ENCODE measurements at regions of chr3 and their contacts with region 1.

Region 1: GRCh38 chr3:33787328-33788009 is 11.0 kb upstream of the PDCD6IP start:
- DNase-seq: peak; percentile 84
- ATAC-seq: peak; percentile 81
- H3K4me3 ChIP-seq: peak overlapping the region; percentile 39; the same call in 1 of the 2 replicates
- H3K27ac ChIP-seq: no peak overlapping the region
- H3K4me1 ChIP-seq: peaks cover 30% of the 10 kb centered on the region
- H3K27me3 ChIP-seq: no peaks in the 10 kb centered on the region
- CTCF ChIP-seq: peak; percentile 91

Region 2: DNA sequence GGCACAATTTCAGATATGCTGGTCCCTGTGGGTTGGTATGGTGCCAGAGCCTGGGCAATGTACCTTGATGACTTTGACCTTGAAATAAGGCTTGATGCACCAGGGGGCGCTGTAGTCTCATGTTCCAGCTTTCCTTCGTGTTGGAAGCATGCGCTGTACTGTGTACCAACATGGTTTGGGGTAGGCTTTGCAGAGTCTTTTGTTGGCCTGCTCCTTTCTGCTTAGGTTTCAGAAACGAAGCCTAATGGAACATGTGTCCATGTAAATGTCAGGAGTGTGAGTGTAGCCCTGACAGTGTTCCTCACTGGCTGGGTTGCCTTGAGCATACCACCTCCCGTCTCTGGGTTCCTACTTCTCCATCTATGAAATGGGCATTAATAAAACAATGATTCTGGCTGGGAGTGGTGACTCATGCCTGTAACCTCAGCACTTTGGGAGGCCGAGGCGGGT is 839.7 kb before region 1 on chr3:
- CTCF ChIA-PET with region 1: no interaction called
- POLR2A ChIA-PET with region 1: no interaction called
- intact Hi-C with region 1: loop called (anchors 5 kb)
- DNase-seq: peak; percentile 97
- ATAC-seq: peak; percentile 83
- H3K4me3 ChIP-seq: no peak overlapping the region
- H3K27ac ChIP-seq: no peak overlapping the region
- H3K4me1 ChIP-seq: 0 out of 2 replicates have a peak, but pooled peaks cover 6% of the 10 kb centered on the region
- H3K27me3 ChIP-seq: no peaks in the 10 kb centered on the region
- CTCF ChIP-seq: peak; percentile 94

Region 3: GRCh38 chr3:33131331-33132018 is 656.0 kb before region 1 on chr3:
- CTCF ChIA-PET with region 1: interaction called, 8 read pairs
- POLR2A ChIA-PET with region 1: no interaction called
- intact Hi-C with region 1: loop called (anchors 5 kb)
- DNase-seq: peak; percentile 85
- ATAC-seq: peak; percentile 83
- H3K4me3 ChIP-seq: no peak overlapping the region
- H3K27ac ChIP-seq: no peak overlapping the region
- H3K4me1 ChIP-seq: 0 out of 2 replicates have a peak, but pooled peaks cover 3% of the 10 kb centered on the region
- H3K27me3 ChIP-seq: no peaks in the 10 kb centered on the region
- CTCF ChIP-seq: peak; percentile 94

Region 4: GRCh38 chr3:33250712-33251111 is 536.8 kb before region 1 on chr3:
- CTCF ChIA-PET with region 1: no interaction called
- POLR2A ChIA-PET with region 1: no interaction called
- intact Hi-C with region 1: loop called (anchors 10 kb)
- DNase-seq: no peak
- ATAC-seq: no peak
- H3K4me3 ChIP-seq: no peak overlapping the region
- H3K27ac ChIP-seq: no peak overlapping the region
- H3K4me1 ChIP-seq: no peaks in the 10 kb centered on the region
- H3K27me3 ChIP-seq: no peaks in the 10 kb centered on the region
- CTCF ChIP-seq: no peak

Region 5: DNA sequence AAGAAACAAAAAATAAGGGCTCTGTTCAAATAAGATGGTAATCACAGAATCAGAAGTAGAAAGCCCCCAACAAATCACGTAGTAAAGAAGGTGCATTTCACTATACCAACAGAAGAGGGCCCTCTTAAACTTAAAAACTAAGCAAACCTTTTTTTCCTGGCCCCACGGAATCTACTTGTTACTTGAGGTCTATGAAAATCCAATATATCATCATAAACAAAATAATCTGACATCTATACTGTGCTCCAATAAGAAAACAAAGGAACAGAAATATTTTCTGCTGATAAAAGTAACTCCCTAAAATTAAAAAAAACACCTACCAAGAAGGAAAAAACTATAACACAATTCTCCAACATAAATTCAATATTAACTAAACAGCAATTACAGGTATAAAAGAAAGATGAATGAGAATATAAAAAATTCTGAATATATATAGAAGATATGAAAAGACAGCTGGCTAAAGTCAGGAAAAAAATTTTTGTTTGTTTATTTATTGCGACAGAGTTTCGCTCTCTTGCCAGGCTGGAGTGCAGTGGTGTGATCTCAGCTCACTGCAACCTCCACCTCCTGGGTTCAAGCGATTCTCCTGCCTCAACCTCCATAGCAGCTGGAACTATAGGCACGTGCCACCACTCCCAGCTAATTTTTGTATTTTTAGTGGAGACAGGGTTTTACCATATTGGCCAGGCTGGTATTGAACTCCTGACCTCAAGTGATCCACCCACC is 151.2 kb before region 1 on chr3:
- CTCF ChIA-PET with region 1: interaction called, 10 read pairs
- POLR2A ChIA-PET with region 1: interaction called, 3 read pairs
- intact Hi-C with region 1: loop called (anchors 1 kb)
- DNase-seq: peak; percentile 76
- ATAC-seq: peak; percentile 63; the same call in 1 of the 2 replicates
- H3K4me3 ChIP-seq: no peak overlapping the region
- H3K27ac ChIP-seq: no peak overlapping the region
- H3K4me1 ChIP-seq: no peaks in the 10 kb centered on the region
- H3K27me3 ChIP-seq: no peaks in the 10 kb centered on the region
- CTCF ChIP-seq: peak; percentile 86

Measured in PC-3 (cell line).